Activated T-helper 1 cell treated with anti-CD3 and anti-CD28 coated beads, Interleukin-12 subunit alpha, Interleukin-12 subunit beta, Interleukin-2, Interleukin-4 antibody, amounts not matched to agents 30 ng/mL and 10 ng/mL and 1 ng/mL, durations not matched to agents 14 hours and 24 hours and 36 hours (primary cell): ENCODE measurements at regions of chr4 and their contacts with region 1.

Region 1: GRCh38 chr4:83284193-83285054 is at the start of gene COQ2:
- DNase-seq: peak; percentile 93
- H3K4me3 Mint-ChIP-seq: peak within 1 kb of the TSS; percentile 97
- H3K27ac Mint-ChIP-seq: peak within 1 kb of the TSS; percentile 99
- H3K4me1 Mint-ChIP-seq: peaks cover 48% of the 10 kb centered on the region
- H3K27me3 Mint-ChIP-seq: no peaks in the 10 kb centered on the region
- total RNA-seq, gene COQ2: 22.5 and 22.6 TPM in 2 replicates

Region 2: GRCh38 chr4:82373816-82374625 is 910.4 kb before region 1 on chr4 and contains the start of gene HNRNPD:
- intact Hi-C with region 1: loop called (anchors 5 kb)
- DNase-seq: peak; percentile 92
- H3K4me3 Mint-ChIP-seq: peak within 1 kb of the TSS; percentile 99
- H3K27ac Mint-ChIP-seq: peak within 1 kb of the TSS; percentile 100
- H3K4me1 Mint-ChIP-seq: peaks cover 37% of the 10 kb centered on the region
- H3K27me3 Mint-ChIP-seq: peaks cover 2% of the 10 kb centered on the region
- total RNA-seq, gene HNRNPD: 434 and 438 TPM in 2 replicates

Region 3: GRCh38 chr4:82900331-82901128 is 383.9 kb before region 1 on chr4 and contains the start of gene THAP9:
- intact Hi-C with region 1: loop called (anchors 1 kb)
- DNase-seq: peak; percentile 98
- H3K4me3 Mint-ChIP-seq: no peak within 1 kb of the TSS
- H3K27ac Mint-ChIP-seq: no peak within 1 kb of the TSS
- H3K4me1 Mint-ChIP-seq: peaks cover 27% of the 10 kb centered on the region
- H3K27me3 Mint-ChIP-seq: peaks cover 2% of the 10 kb centered on the region
- total RNA-seq, gene THAP9: 1.9 and 2.3 TPM in 2 replicates

Region 4: DNA sequence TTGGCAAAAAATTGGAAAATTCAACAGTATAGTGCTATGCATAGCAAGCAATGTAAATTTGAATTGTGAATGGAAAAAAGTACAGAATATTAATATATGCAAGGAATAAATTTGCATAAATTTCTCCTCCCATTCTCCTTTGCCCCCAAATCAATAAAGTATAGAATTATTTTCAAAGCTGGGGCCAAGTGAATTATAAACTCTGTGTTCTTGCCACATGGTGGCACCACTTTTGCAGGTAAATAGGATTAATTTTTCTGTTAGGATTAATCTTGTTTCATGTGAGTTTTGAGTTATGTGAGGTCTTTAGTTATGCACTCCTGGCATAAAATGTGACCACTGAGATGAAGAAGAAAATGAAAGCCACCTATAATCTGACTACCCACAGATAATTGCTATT is 229.5 kb before region 1 on chr4:
- intact Hi-C with region 1: loop called (anchors 1 kb)
- DNase-seq: no peak
- H3K4me3 Mint-ChIP-seq: no peak overlapping the region
- H3K27ac Mint-ChIP-seq: no peak overlapping the region
- H3K4me1 Mint-ChIP-seq: no peaks in the 10 kb centered on the region
- H3K27me3 Mint-ChIP-seq: no peaks in the 10 kb centered on the region

Region 5: DNA sequence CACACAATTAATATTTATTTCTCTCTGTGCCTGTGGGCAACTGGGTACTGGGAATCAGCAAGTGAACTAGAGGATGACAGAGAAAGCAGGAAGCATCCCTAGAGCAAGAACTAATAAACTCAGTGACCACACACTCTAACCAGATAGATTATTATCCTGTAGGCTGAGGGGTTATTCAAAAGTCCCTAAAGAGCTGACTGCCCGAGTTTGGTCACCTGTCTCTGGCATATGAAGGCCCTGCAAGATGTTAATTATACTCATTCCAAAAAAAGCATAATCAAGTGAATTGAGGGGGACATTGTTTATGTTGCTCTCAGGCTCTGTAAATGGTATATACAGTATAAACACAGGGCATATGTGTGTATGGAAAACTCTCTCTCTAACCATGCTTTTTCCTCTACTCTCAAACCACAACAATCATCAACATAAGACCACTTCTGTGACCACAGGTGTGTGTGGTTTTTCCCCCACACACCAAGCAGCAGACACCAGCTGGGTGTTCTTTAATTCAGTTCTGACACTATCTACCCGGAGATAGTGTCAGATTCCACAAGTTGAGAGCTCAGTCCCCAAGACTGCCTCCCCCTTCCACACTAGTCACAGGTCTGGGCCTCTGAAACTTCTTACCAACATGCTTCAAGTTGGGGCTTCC is 56.4 kb after region 1 on chr4:
- intact Hi-C with region 1: loop called (anchors 1 kb)
- DNase-seq: peak; percentile 48
- H3K4me3 Mint-ChIP-seq: peak overlapping the region; percentile 23
- H3K27ac Mint-ChIP-seq: peak overlapping the region; percentile 98
- H3K4me1 Mint-ChIP-seq: peaks cover 30% of the 10 kb centered on the region
- H3K27me3 Mint-ChIP-seq: peaks cover 26% of the 10 kb centered on the region

Region 6: GRCh38 chr4:83484500-83485461 is 200.4 kb after region 1 on chr4 and contains the start of gene ABRAXAS1:
- intact Hi-C with region 1: loop called (anchors 1 kb)
- DNase-seq: peak; percentile 91
- H3K4me3 Mint-ChIP-seq: peak within 1 kb of the TSS; percentile 90
- H3K27ac Mint-ChIP-seq: peak within 1 kb of the TSS; percentile 95
- H3K4me1 Mint-ChIP-seq: peaks cover 10% of the 10 kb centered on the region
- H3K27me3 Mint-ChIP-seq: peaks cover under 1% of the 10 kb centered on the region
- total RNA-seq, gene ABRAXAS1: 11.0 and 11.3 TPM in 2 replicates